GM12878 (cell line): ENCODE measurements at regions of chr11 and their contacts with region 1.

Region 1: GRCh38 chr11:120511116-120511819 is at the start of gene GRIK4:
- DNase-seq: no peak
- ATAC-seq: peak; percentile 95
- H3K4me3 ChIP-seq: peak within 1 kb of the TSS; percentile 16; the same call in 1 of the 2 replicates
- H3K27ac ChIP-seq: no peak within 1 kb of the TSS
- H3K4me1 ChIP-seq: no peaks in the 10 kb centered on the region; the same call in 1 of the 2 replicates
- H3K27me3 ChIP-seq: no peaks in the 10 kb centered on the region
- CTCF ChIP-seq: peak; percentile 88 to 98 (median 92)
- EP300 ChIP-seq: no peak
- POLR2A ChIP-seq: no peak
- RAD21 ChIP-seq: peak; percentile 99
- polyA plus RNA-seq, gene GRIK4: 0.33 to 0.45 TPM

Region 2: GRCh38 chr11:120527111-120527761 is 16.0 kb after region 1 on chr11:
- CTCF ChIA-PET with region 1: no interaction called
- POLR2A ChIA-PET with region 1: no interaction called
- RAD21 ChIA-PET with region 1: no interaction called
- SMC1A ChIA-PET with region 1: no interaction called
- in situ Hi-C with region 1: no loop called
- intact Hi-C with region 1: no loop called
- DNase-seq: no peak
- ATAC-seq: no peak
- H3K4me3 ChIP-seq: no peak overlapping the region
- H3K27ac ChIP-seq: no peak overlapping the region
- H3K4me1 ChIP-seq: no peaks in the 10 kb centered on the region
- H3K27me3 ChIP-seq: peaks cover 0 to 1% of the 10 kb centered on the region in 2 experiments; a peak in 2 of 4 replicates
- CTCF ChIP-seq: no peak
- EP300 ChIP-seq: no peak
- POLR2A ChIP-seq: no peak
- RAD21 ChIP-seq: no peak

Region 3: GRCh38 chr11:120612513-120613263 is 101.4 kb after region 1 on chr11:
- CTCF ChIA-PET with region 1: interaction called, 10 read pairs
- POLR2A ChIA-PET with region 1: no interaction called
- RAD21 ChIA-PET with region 1: interaction called, 12 read pairs
- SMC1A ChIA-PET with region 1: interaction called, 4 read pairs
- in situ Hi-C with region 1: no loop called
- intact Hi-C with region 1: loop called (anchors 2 kb)
- DNase-seq: peak; percentile 94
- ATAC-seq: peak; percentile 91
- H3K4me3 ChIP-seq: no peak overlapping the region; the same call in 1 of the 2 replicates
- H3K27ac ChIP-seq: peak overlapping the region; percentile 75
- H3K4me1 ChIP-seq: peaks cover 32% of the 10 kb centered on the region
- H3K27me3 ChIP-seq: no peaks in the 10 kb centered on the region
- CTCF ChIP-seq: peak in 1 of 3 experiments; percentile 19; a peak in 1 of 6 replicates
- EP300 ChIP-seq: peak; percentile 76 to 89; a peak in 3 of 4 replicates
- POLR2A ChIP-seq: no peak; the same call in 1 of the 2 replicates
- RAD21 ChIP-seq: no peak

Region 4: GRCh38 chr11:120674542-120674941 is 163.3 kb after region 1 on chr11:
- CTCF ChIA-PET with region 1: interaction called, 10 read pairs
- POLR2A ChIA-PET with region 1: no interaction called
- RAD21 ChIA-PET with region 1: interaction called, 4 read pairs
- SMC1A ChIA-PET with region 1: no interaction called
- in situ Hi-C with region 1: no loop called
- intact Hi-C with region 1: no loop called
- DNase-seq: no peak
- ATAC-seq: no peak
- H3K4me3 ChIP-seq: no peak overlapping the region
- H3K27ac ChIP-seq: no peak overlapping the region
- H3K4me1 ChIP-seq: no peaks in the 10 kb centered on the region; the same call in 1 of the 2 replicates
- H3K27me3 ChIP-seq: no peaks in the 10 kb centered on the region
- CTCF ChIP-seq: no peak
- EP300 ChIP-seq: no peak
- POLR2A ChIP-seq: no peak
- RAD21 ChIP-seq: no peak

Region 5: DNA sequence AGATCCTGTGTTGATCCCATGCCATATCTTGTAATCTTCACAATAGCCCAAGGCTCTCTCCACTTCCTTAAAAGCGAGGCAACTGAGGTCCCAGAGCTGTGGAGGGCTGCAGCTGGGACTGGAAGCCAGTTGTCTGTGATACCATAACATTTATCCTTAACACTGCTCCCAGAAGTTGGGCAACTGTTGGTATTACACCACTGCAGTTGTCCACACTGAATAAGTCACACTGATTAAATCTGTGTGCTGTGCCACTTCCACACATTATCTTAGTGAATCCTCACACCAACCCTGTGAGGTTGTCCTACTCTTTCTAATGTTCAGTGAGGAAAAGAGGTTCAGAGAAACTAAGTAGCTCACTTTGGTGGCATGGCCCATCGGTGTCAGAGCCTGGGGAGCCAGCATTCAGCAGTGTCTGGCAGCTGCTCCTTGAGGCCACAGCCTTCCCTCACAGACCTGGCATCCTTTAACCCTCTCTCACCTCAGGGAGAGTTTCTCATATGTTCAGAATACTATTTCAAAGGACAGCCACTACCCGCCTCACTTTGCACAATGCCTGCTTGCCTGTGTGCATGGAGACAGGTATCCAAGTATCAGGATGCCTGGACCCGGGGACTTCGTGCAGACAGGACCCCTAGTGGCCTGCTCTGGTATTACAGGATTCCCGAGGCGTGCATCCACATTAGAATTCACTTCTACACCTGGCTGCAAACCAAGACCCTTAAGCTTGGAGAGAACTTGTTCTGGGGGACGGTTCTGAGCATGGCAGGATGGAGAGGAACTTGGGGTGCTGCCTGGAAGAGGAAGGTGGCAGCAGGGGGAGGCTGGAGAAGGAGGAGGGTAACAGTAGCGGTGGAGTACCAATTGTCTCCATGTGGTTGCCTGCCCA is 290.8 kb after region 1 on chr11:
- CTCF ChIA-PET with region 1: interaction called, 48 read pairs
- POLR2A ChIA-PET with region 1: no interaction called
- RAD21 ChIA-PET with region 1: interaction called, 18 read pairs
- SMC1A ChIA-PET with region 1: interaction called, 7 read pairs
- in situ Hi-C with region 1: no loop called
- intact Hi-C with region 1: loop called (anchors 1 kb)
- DNase-seq: no peak
- ATAC-seq: peak; percentile 80
- H3K4me3 ChIP-seq: no peak overlapping the region
- H3K27ac ChIP-seq: no peak overlapping the region
- H3K4me1 ChIP-seq: no peaks in the 10 kb centered on the region
- H3K27me3 ChIP-seq: no peaks in the 10 kb centered on the region
- CTCF ChIP-seq: peak; percentile 87 to 96 (median 91)
- EP300 ChIP-seq: no peak
- POLR2A ChIP-seq: no peak
- RAD21 ChIP-seq: peak; percentile 72

Region 6: DNA sequence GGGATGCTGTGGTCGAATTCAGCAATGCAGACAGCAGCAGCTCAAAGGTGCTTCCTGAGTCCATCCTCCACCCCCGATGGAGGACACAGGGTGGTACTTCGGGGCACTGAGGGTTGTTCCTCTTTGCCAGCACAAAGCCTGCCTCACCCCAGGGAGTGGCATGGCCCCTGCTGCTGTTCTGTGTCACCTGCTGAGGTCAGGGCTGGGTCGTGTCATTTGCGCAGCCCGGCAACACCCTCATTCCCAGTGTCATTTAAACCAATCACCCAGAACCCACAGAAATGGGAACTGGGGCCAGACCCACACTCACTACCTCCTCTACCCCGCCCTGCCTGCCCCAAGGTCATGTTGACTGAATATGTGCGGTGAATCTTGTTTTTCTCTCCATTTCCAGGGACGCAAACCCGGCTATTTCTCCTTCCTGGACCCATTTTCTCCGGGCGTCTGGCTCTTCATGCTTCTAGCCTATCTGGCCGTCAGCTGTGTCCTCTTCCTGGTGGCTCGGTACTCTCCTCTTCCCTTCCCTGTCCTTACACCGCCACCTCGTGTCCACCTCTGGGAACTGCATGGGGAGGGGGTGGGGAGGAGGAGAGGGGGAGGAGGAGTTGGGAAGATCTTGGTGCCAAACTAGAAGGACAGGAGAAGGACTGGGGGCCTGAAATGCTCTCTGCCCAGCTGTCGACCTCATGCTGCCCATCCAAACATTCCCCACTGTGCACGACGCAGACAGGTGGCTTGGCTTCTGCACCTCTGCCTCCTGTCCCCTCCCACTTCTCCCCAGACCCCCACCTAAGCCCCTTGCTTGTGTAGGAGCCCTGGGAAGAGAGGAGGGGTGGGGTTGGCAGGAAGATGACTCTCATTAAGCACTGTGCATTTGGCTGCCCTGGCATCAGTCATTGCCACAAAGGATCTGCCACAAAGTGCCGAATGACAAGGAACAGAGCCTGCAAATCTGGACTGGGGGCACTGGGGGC is 441.5 kb after region 1 on chr11:
- CTCF ChIA-PET with region 1: interaction called, 3 read pairs
- POLR2A ChIA-PET with region 1: no interaction called
- RAD21 ChIA-PET with region 1: interaction called, 6 read pairs
- SMC1A ChIA-PET with region 1: no interaction called
- in situ Hi-C with region 1: no loop called
- intact Hi-C with region 1: loop called (anchors 1 kb)
- DNase-seq: peak; percentile 26
- ATAC-seq: peak; percentile 91
- H3K4me3 ChIP-seq: no peak overlapping the region
- H3K27ac ChIP-seq: no peak overlapping the region
- H3K4me1 ChIP-seq: peaks cover 8% of the 10 kb centered on the region
- H3K27me3 ChIP-seq: no peaks in the 10 kb centered on the region; a peak in 1 of 4 replicates
- CTCF ChIP-seq: peak; percentile 80 to 96 (median 83)
- EP300 ChIP-seq: no peak
- POLR2A ChIP-seq: no peak
- RAD21 ChIP-seq: peak; percentile 97

Region 7: DNA sequence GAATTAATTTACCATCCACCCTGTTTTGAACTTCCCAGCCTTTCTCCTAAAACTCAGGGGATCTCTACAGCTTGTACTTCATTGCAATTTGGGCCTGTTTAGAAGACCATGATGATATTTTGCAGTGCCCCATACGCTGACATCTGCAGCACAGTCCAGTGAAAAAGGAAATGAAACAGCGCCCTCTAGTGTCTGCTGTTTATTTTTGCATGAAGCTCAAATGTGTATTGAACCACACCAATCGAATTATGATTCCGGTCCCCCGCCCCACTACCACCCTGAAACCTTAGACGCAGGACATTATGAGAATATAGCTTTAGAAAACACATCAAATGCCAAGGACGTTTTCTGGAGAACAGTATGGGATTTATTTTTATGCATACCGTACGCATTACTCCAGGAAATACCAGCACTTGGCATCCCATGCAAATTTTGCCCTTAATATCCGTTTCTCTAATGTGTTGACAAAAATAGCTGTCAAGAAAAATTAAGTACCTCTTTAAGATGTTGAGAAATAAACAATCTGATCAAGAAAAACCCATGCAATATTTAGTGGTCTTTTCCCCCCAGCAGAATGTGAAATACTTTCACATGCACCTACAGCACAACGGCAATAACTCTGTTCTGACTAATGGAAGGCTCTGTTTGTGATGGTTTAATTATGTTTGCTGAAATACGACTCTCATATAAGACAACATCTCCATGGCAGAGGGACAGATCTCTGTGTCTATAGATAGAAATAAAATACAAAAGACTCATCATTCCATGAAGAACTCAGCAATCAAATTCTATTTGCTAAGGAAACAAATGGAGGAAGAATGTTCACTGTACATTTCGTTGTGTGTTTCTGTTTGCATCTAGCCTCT is 683.7 kb after region 1 on chr11:
- CTCF ChIA-PET with region 1: interaction called, 8 read pairs
- POLR2A ChIA-PET with region 1: no interaction called
- RAD21 ChIA-PET with region 1: interaction called, 5 read pairs
- SMC1A ChIA-PET with region 1: interaction called, 5 read pairs
- in situ Hi-C with region 1: no loop called
- intact Hi-C with region 1: loop called (anchors 2 kb)
- DNase-seq: peak; percentile 31
- ATAC-seq: peak; percentile 99
- H3K4me3 ChIP-seq: no peak overlapping the region
- H3K27ac ChIP-seq: no peak overlapping the region
- H3K4me1 ChIP-seq: no peaks in the 10 kb centered on the region
- H3K27me3 ChIP-seq: no peaks in the 10 kb centered on the region
- CTCF ChIP-seq: peak; percentile 72 to 84 (median 83)
- EP300 ChIP-seq: no peak
- POLR2A ChIP-seq: no peak
- RAD21 ChIP-seq: peak; percentile 86